OCI-LY7 (cell line): ENCODE measurements at regions of chr19 and their contacts with region 1.

Region 1: GRCh38 chr19:51926784-51927742 is at the start of gene ZNF613:
- DNase-seq: peak; percentile 87
- H3K4me3 ChIP-seq: peak within 1 kb of the TSS; percentile 75
- H3K27ac ChIP-seq: peak within 1 kb of the TSS; percentile 48
- H3K4me1 ChIP-seq: no peaks in the 10 kb centered on the region
- CTCF ChIP-seq: peak; percentile 32; the same call in 1 of the 2 replicates
- total RNA-seq, gene ZNF613: 4.6 and 10.0 TPM in 2 replicates

Region 2: DNA sequence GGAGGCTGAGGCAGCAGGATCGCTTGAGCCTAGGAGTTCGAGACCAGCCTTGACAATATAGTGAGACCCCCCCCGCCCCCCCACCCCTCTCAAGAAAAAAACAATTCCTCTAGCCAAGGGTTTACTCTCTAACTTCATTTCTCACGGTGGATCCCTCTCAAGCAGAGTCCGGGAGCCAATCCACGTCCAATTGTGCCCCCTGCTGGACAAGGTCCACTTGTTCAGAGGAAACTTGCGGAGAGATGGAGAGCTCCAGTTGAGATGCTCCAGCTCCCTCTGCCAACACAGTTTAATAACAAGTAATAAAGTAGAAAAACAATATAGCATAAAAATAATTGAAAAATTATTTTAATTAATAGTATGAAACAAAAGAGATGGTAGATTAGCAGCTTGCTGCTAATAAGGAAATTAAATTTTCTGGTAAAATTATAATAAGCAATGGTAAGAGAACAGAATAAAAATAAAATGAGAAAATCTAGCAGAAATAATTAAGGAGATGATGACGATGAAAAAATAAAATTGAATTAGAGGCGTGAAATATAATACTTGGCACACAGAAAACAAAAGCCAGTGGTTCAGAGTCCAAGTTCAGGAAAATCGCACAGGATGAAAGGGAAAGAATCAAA is 266.0 kb before region 1 on chr19:
- CTCF ChIA-PET with region 1: no interaction called
- POLR2A ChIA-PET with region 1: no interaction called
- intact Hi-C with region 1: no loop called
- DNase-seq: peak; percentile 76
- H3K4me3 ChIP-seq: no peak overlapping the region
- H3K27ac ChIP-seq: no peak overlapping the region
- H3K4me1 ChIP-seq: peaks cover 4% of the 10 kb centered on the region
- CTCF ChIP-seq: peak; percentile 74

Region 3: DNA sequence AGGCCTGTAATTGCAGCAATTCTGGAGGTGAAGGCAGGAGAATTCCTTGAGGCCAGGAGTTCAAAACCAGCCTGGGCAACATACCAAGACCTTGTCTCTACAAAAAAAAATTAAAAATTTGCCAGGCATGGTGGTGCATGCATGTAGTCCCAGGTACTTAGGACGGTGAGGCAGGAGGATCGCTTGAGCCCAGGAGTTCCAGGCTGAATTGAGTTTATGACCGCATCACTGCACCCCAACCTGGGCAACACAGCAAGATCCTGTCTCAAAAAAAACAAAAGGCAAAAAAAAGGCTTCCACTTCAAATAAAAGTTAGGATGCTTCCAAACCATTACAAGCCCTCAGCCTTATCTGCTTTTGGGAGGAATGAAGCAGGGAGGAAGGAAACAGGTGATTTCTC is 44.5 kb before region 1 on chr19:
- CTCF ChIA-PET with region 1: no interaction called
- POLR2A ChIA-PET with region 1: no interaction called
- intact Hi-C with region 1: no loop called
- DNase-seq: no peak
- H3K4me3 ChIP-seq: no peak overlapping the region
- H3K27ac ChIP-seq: no peak overlapping the region
- H3K4me1 ChIP-seq: no peaks in the 10 kb centered on the region
- CTCF ChIP-seq: no peak

Region 4: DNA sequence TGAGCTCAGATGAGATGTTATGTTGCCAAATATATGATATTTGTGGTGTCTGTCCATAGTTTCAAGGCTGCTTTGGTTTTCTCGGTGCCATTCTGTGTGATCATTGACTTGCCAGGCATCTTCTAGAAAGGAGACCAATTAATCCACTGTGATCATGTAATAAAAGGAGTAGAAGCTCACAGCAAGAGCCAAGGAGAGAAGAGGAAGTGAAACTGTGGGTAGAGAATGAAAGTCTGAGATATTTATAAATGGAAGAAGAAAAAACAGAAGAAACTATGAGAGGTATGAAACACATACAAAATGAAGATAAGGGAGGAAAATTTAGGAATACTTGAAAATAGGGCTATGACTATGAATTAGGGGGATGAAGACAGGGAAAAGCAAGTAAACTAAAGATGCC is 10.9 kb before region 1 on chr19:
- CTCF ChIA-PET with region 1: no interaction called
- POLR2A ChIA-PET with region 1: no interaction called
- intact Hi-C with region 1: no loop called
- DNase-seq: peak; percentile 57
- H3K4me3 ChIP-seq: no peak overlapping the region
- H3K27ac ChIP-seq: no peak overlapping the region
- H3K4me1 ChIP-seq: peaks cover 8% of the 10 kb centered on the region
- CTCF ChIP-seq: no peak

Region 5: GRCh38 chr19:52237771-52238400 is 310.8 kb after region 1 on chr19:
- CTCF ChIA-PET with region 1: no interaction called
- POLR2A ChIA-PET with region 1: no interaction called
- intact Hi-C with region 1: loop called (anchors 10 kb)
- DNase-seq: peak; percentile 68
- H3K4me3 ChIP-seq: no peak overlapping the region
- H3K27ac ChIP-seq: no peak overlapping the region
- H3K4me1 ChIP-seq: no peaks in the 10 kb centered on the region
- CTCF ChIP-seq: peak; percentile 96